Panc1 (cell line): ENCODE measurements at regions of chr20 and their contacts with region 1.

Region 1: DNA sequence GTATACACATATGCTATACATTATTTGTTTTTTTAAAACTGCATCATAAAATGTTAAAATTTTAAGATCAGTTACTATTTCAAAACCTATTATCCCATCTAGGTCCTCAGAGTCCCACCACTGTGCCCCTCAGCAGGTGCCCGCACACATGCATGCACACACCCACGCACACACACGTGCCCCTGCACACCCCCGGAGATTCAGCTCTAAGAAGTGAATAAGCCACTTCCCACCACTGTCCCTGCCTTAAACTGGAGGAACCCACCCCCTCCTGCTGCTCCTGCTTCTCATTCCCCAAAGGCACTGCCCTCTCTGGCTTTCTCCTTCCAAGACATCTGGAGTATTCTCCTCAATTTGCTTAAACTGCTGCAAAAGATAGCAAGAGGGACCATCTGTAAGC is 5.4 kb upstream of the FAM210B start:
- DNase-seq: no peak
- ATAC-seq: no peak
- H3K4me3 ChIP-seq: no peak overlapping the region
- H3K27ac ChIP-seq: no peak overlapping the region
- H3K4me1 ChIP-seq: no peaks in the 10 kb centered on the region
- H3K27me3 ChIP-seq: peaks cover 3% of the 10 kb centered on the region
- CTCF ChIP-seq: no peak

Region 2: GRCh38 chr20:55714736-55715135 is 638.6 kb before region 1 on chr20:
- CTCF ChIA-PET with region 1: no interaction called
- POLR2A ChIA-PET with region 1: interaction called, 14 read pairs
- in situ Hi-C with region 1: no loop called
- intact Hi-C with region 1: no loop called
- DNase-seq: no peak
- ATAC-seq: no peak
- H3K4me3 ChIP-seq: no peak overlapping the region
- H3K27ac ChIP-seq: no peak overlapping the region
- H3K4me1 ChIP-seq: no peaks in the 10 kb centered on the region
- H3K27me3 ChIP-seq: no peaks in the 10 kb centered on the region
- CTCF ChIP-seq: no peak

Region 3: GRCh38 chr20:56017560-56017959 is 335.8 kb before region 1 on chr20:
- CTCF ChIA-PET with region 1: no interaction called
- POLR2A ChIA-PET with region 1: no interaction called
- in situ Hi-C with region 1: no loop called
- intact Hi-C with region 1: no loop called
- DNase-seq: no peak
- ATAC-seq: no peak
- H3K4me3 ChIP-seq: no peak overlapping the region
- H3K27ac ChIP-seq: no peak overlapping the region
- H3K4me1 ChIP-seq: no peaks in the 10 kb centered on the region
- H3K27me3 ChIP-seq: no peaks in the 10 kb centered on the region
- CTCF ChIP-seq: no peak

Region 4: GRCh38 chr20:56091629-56092314 is 261.6 kb before region 1 on chr20:
- CTCF ChIA-PET with region 1: no interaction called
- POLR2A ChIA-PET with region 1: no interaction called
- in situ Hi-C with region 1: no loop called
- intact Hi-C with region 1: no loop called
- DNase-seq: no peak
- ATAC-seq: no peak
- H3K4me3 ChIP-seq: no peak overlapping the region
- H3K27ac ChIP-seq: no peak overlapping the region
- H3K4me1 ChIP-seq: no peaks in the 10 kb centered on the region
- H3K27me3 ChIP-seq: no peaks in the 10 kb centered on the region
- CTCF ChIP-seq: no peak

Region 5: GRCh38 chr20:56316051-56316450 is 37.3 kb before region 1 on chr20:
- CTCF ChIA-PET with region 1: no interaction called
- POLR2A ChIA-PET with region 1: no interaction called
- in situ Hi-C with region 1: no loop called
- intact Hi-C with region 1: no loop called
- DNase-seq: no peak
- ATAC-seq: no peak
- H3K4me3 ChIP-seq: no peak overlapping the region
- H3K27ac ChIP-seq: no peak overlapping the region
- H3K4me1 ChIP-seq: no peaks in the 10 kb centered on the region
- H3K27me3 ChIP-seq: no peaks in the 10 kb centered on the region
- CTCF ChIP-seq: no peak

Region 6: GRCh38 chr20:56328853-56329252 is 24.5 kb before region 1 on chr20:
- CTCF ChIA-PET with region 1: no interaction called
- POLR2A ChIA-PET with region 1: no interaction called
- in situ Hi-C with region 1: no loop called
- intact Hi-C with region 1: no loop called
- DNase-seq: no peak
- ATAC-seq: no peak
- H3K4me3 ChIP-seq: no peak overlapping the region
- H3K27ac ChIP-seq: no peak overlapping the region
- H3K4me1 ChIP-seq: no peaks in the 10 kb centered on the region
- H3K27me3 ChIP-seq: no peaks in the 10 kb centered on the region
- CTCF ChIP-seq: no peak